Mammary epithelial cell (primary cell): ENCODE measurements at regions of chr3 and their contacts with region 1.

Region 1: GRCh38 chr3:68972358-68972979 is 40.1 kb upstream of the TAFA4 start:
- DNase-seq: peak; percentile 38
- H3K4me3 ChIP-seq: no peak overlapping the region
- H3K27ac ChIP-seq: no peak overlapping the region
- H3K4me1 ChIP-seq: no peaks in the 10 kb centered on the region
- H3K27me3 ChIP-seq: peaks cover 6% of the 10 kb centered on the region
- CTCF ChIP-seq: peak; percentile 80 to 86

Region 2: GRCh38 chr3:68893600-68894239 is 78.7 kb before region 1 on chr3:
- CTCF ChIA-PET with region 1: no interaction called
- dilution Hi-C with region 1: no loop called
- in situ Hi-C with region 1: no loop called
- intact Hi-C with region 1: loop called (anchors 5 kb)
- DNase-seq: peak; percentile 16
- H3K4me3 ChIP-seq: no peak overlapping the region
- H3K27ac ChIP-seq: no peak overlapping the region
- H3K4me1 ChIP-seq: no peaks in the 10 kb centered on the region
- H3K27me3 ChIP-seq: no peaks in the 10 kb centered on the region
- CTCF ChIP-seq: peak; percentile 23 to 44

Region 3: GRCh38 chr3:69197455-69198185 is 225.2 kb after region 1 on chr3:
- CTCF ChIA-PET with region 1: no interaction called
- dilution Hi-C with region 1: no loop called
- in situ Hi-C with region 1: no loop called
- intact Hi-C with region 1: no loop called
- DNase-seq: no peak
- H3K4me3 ChIP-seq: no peak overlapping the region
- H3K27ac ChIP-seq: no peak overlapping the region
- H3K4me1 ChIP-seq: peaks cover 13% of the 10 kb centered on the region
- H3K27me3 ChIP-seq: no peaks in the 10 kb centered on the region
- CTCF ChIP-seq: no peak